Activated CD4-positive, alpha-beta memory T cell treated with anti-CD3 and anti-CD28 coated beads for 36 hours (primary cell): ENCODE measurements at regions of chr13 and their contacts with region 1.

Region 1: GRCh38 chr13:45511310-45512097 is 46.8 kb downstream of the COG3 start:
- DNase-seq: peak; percentile 13
- H3K4me3 Mint-ChIP-seq: no peak overlapping the region
- H3K27ac Mint-ChIP-seq: peak overlapping the region; percentile 70
- H3K4me1 Mint-ChIP-seq: peaks cover 13% of the 10 kb centered on the region
- H3K27me3 Mint-ChIP-seq: no peaks in the 10 kb centered on the region

Region 2: GRCh38 chr13:45718063-45718462 is 206.6 kb after region 1 on chr13:
- CTCF ChIA-PET with region 1: no interaction called
- POLR2A ChIA-PET with region 1: no interaction called
- intact Hi-C with region 1: loop called (anchors 5 kb)
- DNase-seq: no peak
- H3K4me3 Mint-ChIP-seq: no peak overlapping the region
- H3K27ac Mint-ChIP-seq: no peak overlapping the region
- H3K4me1 Mint-ChIP-seq: no peaks in the 10 kb centered on the region
- H3K27me3 Mint-ChIP-seq: peaks cover 3% of the 10 kb centered on the region